ENCODE measurements at regions of chr3 and their contacts with region 1.

Region 1: DNA sequence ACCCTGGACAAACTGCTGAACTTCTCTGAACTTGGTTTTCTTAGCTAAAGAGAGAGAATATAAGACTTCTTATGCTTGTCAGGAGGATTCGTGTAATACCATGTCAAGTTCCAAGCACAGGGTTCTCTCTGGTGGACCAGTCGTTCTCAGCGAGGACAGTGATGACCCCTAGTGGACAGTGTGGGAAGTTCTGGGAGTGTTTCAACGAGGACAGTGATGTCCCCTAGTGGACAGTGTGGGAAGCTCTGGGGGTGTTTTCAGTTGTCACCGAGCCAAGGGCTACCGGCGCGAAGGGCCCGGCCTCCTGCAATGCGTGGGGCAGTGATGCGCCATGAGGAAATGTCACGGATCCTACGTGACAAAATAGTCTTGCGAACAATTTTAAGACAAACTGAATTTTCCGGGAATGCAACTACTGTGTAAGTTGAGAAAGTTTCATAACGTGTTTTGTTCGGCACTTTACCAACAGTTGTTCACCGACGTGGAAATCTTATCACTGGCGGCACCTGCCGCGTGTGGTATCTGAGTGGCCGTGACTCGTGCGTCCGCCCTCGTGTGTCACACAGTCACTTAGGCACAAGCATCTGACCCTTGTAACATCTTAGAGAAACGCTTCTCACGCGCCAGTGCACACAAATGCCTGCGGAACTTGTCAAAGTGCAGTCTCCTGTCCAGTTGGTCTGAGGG is 39.3 kb upstream of the MUC4 start:
- DNase-seq: peak; percentile 79 to 87
- ATAC-seq: peak; percentile 86 to 88
- H3K4me3 ChIP-seq: peak overlapping the region in 2 of 4 donors; percentile 4 to 35
- H3K27ac ChIP-seq: peak overlapping the region in 3 of 4 donors; percentile 48 to 67 (median 58)
- H3K4me1 ChIP-seq: peaks cover 17 to 22% of the 10 kb centered on the region in 2 donors
- H3K27me3 ChIP-seq: no peaks in the 10 kb centered on the region
- CTCF ChIP-seq: peak; percentile 99 to 100 (median 100)
- POLR2A ChIP-seq: peak in 1 of 2 donors; percentile 8

Region 2: DNA sequence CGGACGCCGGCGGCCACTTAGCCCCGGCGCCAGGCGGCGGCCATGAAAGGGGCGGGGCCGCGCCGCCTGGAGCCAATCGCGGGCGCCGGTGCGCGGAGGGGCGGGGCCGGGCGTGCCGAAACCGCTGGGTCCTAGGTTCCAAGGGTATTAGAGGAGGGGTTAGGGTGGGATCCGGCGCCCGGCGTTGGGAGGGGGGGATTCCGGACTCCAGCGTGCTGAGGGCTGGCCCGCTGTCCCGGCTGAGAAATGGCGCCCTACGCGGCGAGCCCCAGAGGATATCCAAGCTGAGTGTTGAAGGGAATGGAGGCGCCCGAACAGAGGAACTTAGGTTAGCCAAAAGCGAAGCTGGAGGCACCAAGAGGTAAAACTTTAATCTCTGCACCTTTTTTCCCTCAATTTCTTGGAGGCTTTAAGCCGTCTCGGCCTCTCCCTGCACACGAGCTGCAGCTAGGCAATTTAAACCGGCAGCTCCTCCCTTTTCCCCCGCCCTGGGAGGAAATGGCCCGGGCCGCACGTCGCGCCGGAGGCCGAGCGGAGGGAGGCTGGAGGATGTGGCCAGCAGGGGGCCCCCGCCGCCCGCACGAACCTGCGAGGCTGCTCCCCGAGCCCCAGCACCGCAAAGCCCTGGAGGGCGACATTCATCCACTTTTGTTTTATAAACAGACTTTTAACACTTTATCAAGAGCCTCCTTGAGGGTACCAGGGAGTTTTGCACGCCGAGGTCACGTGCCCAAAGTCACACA is 579.7 kb before region 1 on chr3 and contains the start of gene XXYLT1:
- in situ Hi-C with region 1: no loop called
- intact Hi-C with region 1: loop called (anchors 10 kb)
- DNase-seq: peak; percentile 70 to 81
- ATAC-seq: peak; percentile 93 to 96
- H3K4me3 ChIP-seq: peak within 1 kb of the TSS; percentile 73 to 96 (median 85)
- H3K27ac ChIP-seq: peak within 1 kb of the TSS; percentile 78 to 95 (median 87)
- H3K4me1 ChIP-seq: peaks cover 15 to 19% of the 10 kb centered on the region in 2 donors
- H3K27me3 ChIP-seq: no peaks in the 10 kb centered on the region
- CTCF ChIP-seq: peak; percentile 84 to 94 (median 90)
- POLR2A ChIP-seq: no peak
- total RNA-seq, gene XXYLT1: 0.87 to 3.1 (median 1.3) TPM

Region 3: GRCh38 chr3:195542698-195543499 is 308.1 kb before region 1 on chr3 and contains the start of gene PPP1R2:
- in situ Hi-C with region 1: no loop called
- intact Hi-C with region 1: loop called (anchors 5 kb)
- DNase-seq: peak; percentile 88 to 92
- ATAC-seq: peak; percentile 78 to 80
- H3K4me3 ChIP-seq: peak within 1 kb of the TSS; percentile 85 to 99 (median 91)
- H3K27ac ChIP-seq: peak within 1 kb of the TSS; percentile 95 to 99 (median 98)
- H3K4me1 ChIP-seq: peaks cover 44 to 61% of the 10 kb centered on the region in 2 donors
- H3K27me3 ChIP-seq: no peaks in the 10 kb centered on the region
- CTCF ChIP-seq: no peak
- POLR2A ChIP-seq: peak; percentile 98 to 99
- total RNA-seq, gene PPP1R2: 80.6 to 133 (median 108) TPM

Region 4: GRCh38 chr3:195558602-195559001 is 292.4 kb before region 1 on chr3:
- in situ Hi-C with region 1: loop called in 1 of 4 experiments (anchors 25 kb)
- intact Hi-C with region 1: loop called (anchors 1 kb)
- DNase-seq: peak; percentile 91 to 94
- ATAC-seq: peak; percentile 91 to 93
- H3K4me3 ChIP-seq: no peak overlapping the region
- H3K27ac ChIP-seq: peak overlapping the region; percentile 87 to 93 (median 88)
- H3K4me1 ChIP-seq: peaks cover 23 to 37% of the 10 kb centered on the region in 2 donors
- H3K27me3 ChIP-seq: no peaks in the 10 kb centered on the region
- CTCF ChIP-seq: peak; percentile 60 to 73 (median 65)
- POLR2A ChIP-seq: peak in 1 of 2 donors; percentile 23

Region 5: GRCh38 chr3:195583831-195584542 is 267.0 kb before region 1 on chr3 and contains the start of gene APOD:
- in situ Hi-C with region 1: loop called in 1 of 4 experiments (anchors 25 kb)
- intact Hi-C with region 1: no loop called
- DNase-seq: peak; percentile 73 to 81
- ATAC-seq: peak; percentile 65 to 73
- H3K4me3 ChIP-seq: peak within 1 kb of the TSS; percentile 32 to 46 (median 37)
- H3K27ac ChIP-seq: peak within 1 kb of the TSS; percentile 54 to 76 (median 70)
- H3K4me1 ChIP-seq: peaks cover 26 to 27% of the 10 kb centered on the region in 2 donors
- H3K27me3 ChIP-seq: no peaks in the 10 kb centered on the region
- CTCF ChIP-seq: no peak
- POLR2A ChIP-seq: peak in 1 of 2 donors; percentile 37
- total RNA-seq, gene APOD: 602 to 801 (median 626) TPM

Region 6: GRCh38 chr3:195612075-195612800 is 238.8 kb before region 1 on chr3:
- in situ Hi-C with region 1: loop called in 1 of 4 experiments (anchors 25 kb)
- intact Hi-C with region 1: no loop called
- DNase-seq: peak; percentile 35 to 47
- ATAC-seq: peak; percentile 33 to 35
- H3K4me3 ChIP-seq: no peak overlapping the region
- H3K27ac ChIP-seq: peak overlapping the region in 2 of 4 donors; percentile 18 to 37
- H3K4me1 ChIP-seq: no peaks in the 10 kb centered on the region
- H3K27me3 ChIP-seq: no peaks in the 10 kb centered on the region
- CTCF ChIP-seq: no peak
- POLR2A ChIP-seq: no peak

Region 7: GRCh38 chr3:195752546-195753331 is 98.3 kb before region 1 on chr3:
- in situ Hi-C with region 1: no loop called
- intact Hi-C with region 1: no loop called
- DNase-seq: no peak
- ATAC-seq: no peak
- H3K4me3 ChIP-seq: no peak overlapping the region
- H3K27ac ChIP-seq: no peak overlapping the region
- H3K4me1 ChIP-seq: no peaks in the 10 kb centered on the region
- H3K27me3 ChIP-seq: peaks cover 5 to 13% (median 7%) of the 10 kb centered on the region in 3 donors
- CTCF ChIP-seq: no peak
- POLR2A ChIP-seq: no peak

Region 8: DNA sequence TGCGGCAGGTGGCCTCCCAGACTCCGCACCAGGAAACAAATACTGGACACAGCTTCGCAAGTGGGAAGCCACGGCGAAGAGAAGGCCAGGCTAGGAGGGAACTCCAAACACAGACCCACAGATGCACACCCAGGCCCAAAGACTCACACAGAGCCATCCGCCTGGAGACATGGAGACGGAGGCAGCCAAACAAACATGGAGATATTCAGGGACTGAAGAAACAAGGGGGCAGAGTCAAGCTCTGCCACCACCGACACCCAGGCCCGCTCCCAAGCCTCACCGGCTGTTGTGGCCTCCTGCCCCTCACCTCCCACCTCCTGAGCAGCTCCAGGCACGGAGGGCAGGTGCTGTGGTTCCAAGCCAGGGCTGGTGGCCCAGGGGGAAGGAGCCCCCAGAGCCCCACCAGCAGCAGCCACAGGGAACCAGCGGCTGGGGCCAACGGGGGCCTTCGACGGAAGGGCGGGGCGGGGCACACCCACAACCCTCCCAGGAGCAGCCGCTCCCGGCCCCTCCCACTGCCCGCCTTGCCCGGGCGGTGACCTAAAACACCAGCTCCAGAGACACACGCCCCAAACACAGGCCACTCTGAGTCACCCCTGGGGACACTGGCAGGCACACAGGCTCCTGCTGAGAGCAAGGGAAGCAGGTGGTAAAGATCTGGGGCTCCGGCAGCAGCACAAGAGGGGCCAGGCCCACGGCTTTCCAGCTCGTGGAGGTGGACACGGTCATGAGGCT is 25.5 kb after region 1 on chr3:
- in situ Hi-C with region 1: no loop called
- intact Hi-C with region 1: no loop called
- DNase-seq: peak; percentile 91 to 95
- ATAC-seq: peak; percentile 88 to 94
- H3K4me3 ChIP-seq: peak overlapping the region in 1 of 4 donors; percentile 23
- H3K27ac ChIP-seq: peak overlapping the region; percentile 87 to 93 (median 92)
- H3K4me1 ChIP-seq: peaks cover 23 to 42% of the 10 kb centered on the region in 2 donors
- H3K27me3 ChIP-seq: no peaks in the 10 kb centered on the region
- CTCF ChIP-seq: no peak
- POLR2A ChIP-seq: peak; percentile 64 to 66

Region 9: DNA sequence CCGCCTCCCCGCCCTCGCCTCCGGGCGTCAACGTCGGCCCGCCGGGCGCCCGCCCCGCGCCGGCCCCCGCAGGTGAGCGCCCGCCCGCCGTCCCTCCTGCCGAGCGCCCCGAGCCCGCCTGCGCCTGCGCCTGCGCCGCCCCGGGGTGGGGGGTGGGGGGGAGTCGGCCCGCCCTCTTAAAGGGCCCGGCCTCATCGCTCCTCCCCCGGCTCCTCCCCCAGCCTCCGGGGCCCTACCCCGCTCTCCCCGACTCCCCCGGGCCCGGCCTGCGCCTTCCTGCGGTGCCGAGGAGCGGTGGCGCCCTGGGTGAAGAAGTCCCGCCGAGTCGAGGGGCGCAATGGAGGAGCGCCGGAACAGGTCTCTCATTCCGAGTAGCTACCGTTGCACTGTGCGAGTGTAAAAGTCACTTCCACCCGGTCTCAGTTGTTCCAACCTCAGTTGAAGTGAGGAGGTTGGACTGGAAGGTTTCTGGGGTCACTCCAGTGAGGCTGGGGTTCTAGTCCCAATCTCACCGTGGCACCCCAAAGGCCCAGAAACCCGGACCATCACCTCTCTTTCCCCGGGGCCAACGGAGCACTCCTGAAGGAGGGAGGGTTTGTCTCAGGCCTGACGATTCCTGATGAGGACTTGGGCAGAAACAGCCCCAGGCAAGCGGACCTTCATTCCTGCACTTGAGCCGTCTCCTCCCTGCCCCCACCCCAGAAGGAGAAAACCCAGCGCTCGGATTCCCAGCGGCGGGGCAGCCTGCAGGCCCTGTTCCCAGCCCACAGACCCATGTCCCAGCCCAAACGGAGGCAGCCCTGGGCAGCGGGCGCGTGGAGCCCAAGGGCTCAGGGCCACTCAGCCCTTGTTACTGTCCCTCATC is 58.9 kb after region 1 on chr3:
- in situ Hi-C with region 1: loop called in 2 of 4 experiments (anchors 10 kb)
- intact Hi-C with region 1: no loop called
- DNase-seq: peak; percentile 77 to 87
- ATAC-seq: peak; percentile 20 to 32
- H3K4me3 ChIP-seq: peak overlapping the region; percentile 54 to 74 (median 66)
- H3K27ac ChIP-seq: peak overlapping the region; percentile 85 to 98 (median 96)
- H3K4me1 ChIP-seq: peaks cover 36 to 48% of the 10 kb centered on the region in 2 donors
- H3K27me3 ChIP-seq: no peaks in the 10 kb centered on the region
- CTCF ChIP-seq: no peak
- POLR2A ChIP-seq: peak; percentile 82 to 88